PC-3 (cell line): ENCODE measurements at regions of chr5 and their contacts with region 1.

Region 1: GRCh38 chr5:140357726-140358093 is 2.3 kb upstream of the SLC4A9 start:
- DNase-seq: peak; percentile 93
- ATAC-seq: peak; percentile 96
- H3K4me3 ChIP-seq: peak overlapping the region; percentile 47; the same call in 1 of the 2 replicates
- H3K27ac ChIP-seq: no peak overlapping the region
- H3K4me1 ChIP-seq: no peaks in the 10 kb centered on the region; the same call in 1 of the 2 replicates
- H3K27me3 ChIP-seq: no peaks in the 10 kb centered on the region
- CTCF ChIP-seq: peak; percentile 94

Region 2: GRCh38 chr5:140169410-140169809 is 188.3 kb before region 1 on chr5:
- CTCF ChIA-PET with region 1: interaction called, 4 read pairs
- POLR2A ChIA-PET with region 1: no interaction called
- intact Hi-C with region 1: loop called (anchors 5 kb)
- DNase-seq: peak; percentile 42
- ATAC-seq: peak; percentile 59
- H3K4me3 ChIP-seq: no peak overlapping the region
- H3K27ac ChIP-seq: no peak overlapping the region
- H3K4me1 ChIP-seq: peaks cover 34% of the 10 kb centered on the region
- H3K27me3 ChIP-seq: no peaks in the 10 kb centered on the region
- CTCF ChIP-seq: peak; percentile 46

Region 3: GRCh38 chr5:140227048-140227447 is 130.7 kb before region 1 on chr5:
- CTCF ChIA-PET with region 1: no interaction called
- POLR2A ChIA-PET with region 1: no interaction called
- intact Hi-C with region 1: no loop called
- DNase-seq: peak; percentile 19
- ATAC-seq: no peak
- H3K4me3 ChIP-seq: no peak overlapping the region
- H3K27ac ChIP-seq: no peak overlapping the region
- H3K4me1 ChIP-seq: peaks cover 6% of the 10 kb centered on the region
- H3K27me3 ChIP-seq: no peaks in the 10 kb centered on the region
- CTCF ChIP-seq: peak; percentile 37; the same call in 1 of the 2 replicates

Region 4: DNA sequence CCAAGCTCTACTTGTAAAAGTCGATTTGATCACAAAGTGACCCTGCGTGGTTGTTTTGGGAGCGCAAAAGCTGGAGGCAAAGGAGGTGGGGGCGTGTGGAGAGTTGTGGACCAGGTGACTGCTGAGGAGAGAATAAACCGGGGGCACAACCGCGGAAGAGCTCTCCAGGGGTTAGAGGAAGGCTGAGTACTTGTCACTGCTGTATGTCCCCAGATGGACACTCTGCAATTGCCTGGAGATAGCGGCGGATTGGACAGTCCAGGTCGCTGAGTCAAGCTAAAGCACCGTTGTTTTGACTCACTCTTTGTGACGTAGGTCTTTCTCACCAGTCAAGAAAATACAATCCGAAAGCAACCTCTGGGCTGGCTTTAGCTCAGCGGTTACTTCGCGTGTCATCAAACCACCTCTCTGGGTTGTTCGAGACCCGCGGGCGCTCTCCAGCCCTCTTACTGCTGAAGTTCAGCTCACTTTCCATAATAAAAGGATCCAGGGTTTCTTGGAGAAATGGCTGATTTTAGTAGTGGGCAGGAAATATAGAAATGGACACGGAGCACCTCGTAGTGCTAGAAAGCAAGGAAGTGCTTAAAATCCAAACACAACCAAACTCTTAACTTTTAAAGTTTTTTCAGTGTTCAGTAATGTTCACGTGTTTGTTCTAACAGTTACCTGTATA is 368.2 kb after region 1 on chr5:
- CTCF ChIA-PET with region 1: no interaction called
- POLR2A ChIA-PET with region 1: no interaction called
- intact Hi-C with region 1: loop called (anchors 5 kb)
- DNase-seq: no peak
- ATAC-seq: no peak
- H3K4me3 ChIP-seq: no peak overlapping the region
- H3K27ac ChIP-seq: no peak overlapping the region
- H3K4me1 ChIP-seq: no peaks in the 10 kb centered on the region
- H3K27me3 ChIP-seq: no peaks in the 10 kb centered on the region
- CTCF ChIP-seq: no peak